A549 (cell line): ENCODE measurements at regions of chr16 and their contacts with region 1.

Region 1: DNA sequence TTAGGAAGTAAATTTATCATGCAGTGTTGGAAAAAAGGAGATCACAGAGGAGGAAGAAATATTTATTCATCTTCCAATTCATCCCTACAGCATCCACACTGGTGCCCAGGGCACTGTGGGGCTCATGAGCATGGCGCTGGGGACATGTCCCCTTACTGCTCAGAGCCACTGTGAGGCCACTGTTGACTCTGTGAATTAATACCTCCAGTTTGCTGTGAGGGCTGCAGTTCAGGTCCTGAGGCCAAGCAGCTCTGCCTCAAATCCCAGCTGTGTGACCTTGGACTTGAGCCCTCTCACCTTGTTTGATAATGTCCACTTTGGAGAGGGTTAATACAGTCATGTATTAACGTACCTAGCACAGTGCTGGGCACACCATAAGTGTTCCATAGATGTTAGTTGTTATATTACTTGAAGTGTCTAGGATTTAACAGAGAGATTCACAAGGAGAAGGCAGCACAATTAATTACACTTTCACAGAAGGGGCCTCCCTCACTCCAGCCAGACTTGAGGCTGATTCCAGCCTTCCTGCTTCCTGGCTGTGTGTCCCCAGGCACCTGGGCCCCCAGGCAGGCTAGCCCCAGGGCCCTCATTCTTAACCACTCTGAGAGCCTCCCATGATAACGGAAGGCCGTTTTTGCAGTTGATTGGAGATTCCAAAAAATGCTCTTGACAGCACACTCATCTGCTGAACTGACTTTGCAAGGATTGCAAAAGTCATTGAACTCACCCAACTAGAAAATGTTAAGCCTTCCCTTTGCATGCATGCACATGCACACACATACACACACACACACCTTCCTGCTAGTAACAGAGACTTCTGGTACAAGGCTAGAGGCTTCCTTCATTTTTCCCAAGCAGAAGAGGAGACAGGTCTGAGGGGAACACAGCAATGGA is 29.4 kb downstream of the KATNIP start:
- DNase-seq: no peak
- ATAC-seq: peak; percentile 57 to 61; a peak in 4 of 6 replicates
- H3K4me3 ChIP-seq: no peak overlapping the region
- H3K27ac ChIP-seq: peak overlapping the region; percentile 61 to 82
- H3K4me1 ChIP-seq: peaks cover 20% of the 10 kb centered on the region
- CTCF ChIP-seq: no peak
- EP300 ChIP-seq: no peak
- POLR2A ChIP-seq: no peak
- RAD21 ChIP-seq: no peak

Region 2: DNA sequence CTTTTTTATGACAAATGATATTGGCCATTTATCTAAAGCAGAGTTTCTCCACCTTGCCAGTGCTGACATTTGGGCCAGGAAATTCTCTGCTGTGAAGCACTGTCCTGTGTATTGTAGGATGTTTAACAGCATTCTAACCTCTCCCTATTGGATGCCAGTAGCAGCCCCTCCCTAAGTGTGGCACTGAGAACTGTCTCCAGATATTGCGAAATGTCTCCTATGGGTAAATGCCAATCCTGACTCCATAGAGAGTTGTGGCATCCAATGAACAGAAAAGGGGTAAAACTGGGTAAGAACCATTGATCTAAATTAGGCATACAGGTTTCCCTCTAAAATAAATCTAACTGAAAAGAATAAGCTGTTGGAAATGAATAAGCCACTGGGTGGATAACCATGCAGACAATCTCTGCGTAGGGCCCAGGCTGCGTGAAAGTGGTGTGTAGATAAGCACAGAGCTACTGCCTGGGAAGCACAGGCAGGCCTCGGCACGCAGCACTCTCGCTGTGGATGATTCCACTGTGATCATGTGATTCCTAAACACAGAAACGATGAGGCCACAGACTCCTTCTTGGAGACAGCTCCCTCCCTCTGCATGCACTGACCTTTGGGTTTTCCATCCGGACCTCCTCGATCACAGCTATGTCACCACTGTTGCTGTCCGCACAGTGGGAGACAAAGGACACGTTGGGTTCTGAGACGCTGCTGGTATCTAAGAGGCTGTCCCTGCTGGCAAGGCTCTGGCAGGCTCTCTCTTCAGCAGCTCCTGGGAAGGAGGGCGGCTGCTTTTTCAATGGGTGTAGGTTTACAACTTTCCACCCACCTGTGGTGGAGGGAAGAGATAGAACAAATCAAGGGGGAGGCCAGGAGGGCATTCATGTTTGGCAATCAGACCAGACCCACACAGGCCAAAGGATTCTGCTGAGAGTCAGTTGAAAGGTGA is 73.8 kb before region 1 on chr16:
- CTCF ChIA-PET with region 1: no interaction called
- POLR2A ChIA-PET with region 1: no interaction called
- DNase-seq: no peak
- ATAC-seq: no peak
- H3K4me3 ChIP-seq: no peak overlapping the region
- H3K27ac ChIP-seq: no peak overlapping the region
- H3K4me1 ChIP-seq: no peaks in the 10 kb centered on the region
- CTCF ChIP-seq: no peak
- EP300 ChIP-seq: no peak
- POLR2A ChIP-seq: no peak
- RAD21 ChIP-seq: no peak

Region 3: DNA sequence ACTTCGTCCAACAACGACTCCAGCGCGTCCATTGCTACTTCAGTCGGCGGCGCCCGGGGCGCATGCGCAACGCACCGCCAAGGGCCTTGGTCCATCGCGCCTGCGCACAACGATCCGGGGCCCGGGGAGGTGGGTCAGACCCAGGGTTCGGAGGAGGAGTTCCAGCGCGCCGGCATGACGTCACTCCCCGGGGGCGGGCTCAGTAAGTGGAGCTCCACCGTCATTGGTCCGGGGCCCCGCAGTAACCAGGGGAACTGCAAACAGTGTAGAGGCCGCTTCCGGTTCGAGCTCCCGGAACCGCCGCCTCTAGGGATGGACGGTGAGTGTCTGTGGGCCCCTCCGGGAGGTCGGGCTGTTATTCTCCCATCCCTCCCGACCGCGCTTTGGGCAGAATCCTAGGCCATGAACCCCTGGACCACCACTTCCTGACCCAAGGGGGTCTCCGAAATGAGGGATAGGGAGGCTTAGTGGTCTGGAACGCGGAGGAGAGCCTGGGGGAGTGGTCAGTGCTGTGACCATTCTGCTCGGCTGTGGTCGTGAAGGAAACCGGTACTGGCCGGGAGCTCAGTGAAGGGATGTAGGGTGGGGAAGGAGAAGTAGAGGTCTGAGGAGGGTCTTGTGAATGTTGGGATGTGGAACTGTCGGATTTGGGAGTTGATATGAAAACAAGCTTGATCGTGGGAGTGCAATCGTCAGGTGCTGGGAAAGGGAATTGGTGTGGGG is 29.3 kb before region 1 on chr16 and contains the starts of genes GTF3C1 and KATNIP:
- CTCF ChIA-PET with region 1: no interaction called
- POLR2A ChIA-PET with region 1: interaction called, 10 read pairs
- DNase-seq: peak; percentile 98 to 100
- ATAC-seq: peak; percentile 99 to 100
- H3K4me3 ChIP-seq: peak within 1 kb of the TSS; percentile 81
- H3K27ac ChIP-seq: peak within 1 kb of the TSS; percentile 77 to 95
- H3K4me1 ChIP-seq: peaks cover 31% of the 10 kb centered on the region
- CTCF ChIP-seq: no peak
- EP300 ChIP-seq: no peak
- POLR2A ChIP-seq: peak; percentile 66
- RAD21 ChIP-seq: no peak
- polyA plus RNA-seq, gene GTF3C1: 40.1 and 41.6 TPM in 2 replicates
- polyA plus RNA-seq, gene KATNIP: 27.1 and 27.9 TPM in 2 replicates